ENCODE measurements at regions of chr5 and their contacts with region 1.

Region 1: DNA sequence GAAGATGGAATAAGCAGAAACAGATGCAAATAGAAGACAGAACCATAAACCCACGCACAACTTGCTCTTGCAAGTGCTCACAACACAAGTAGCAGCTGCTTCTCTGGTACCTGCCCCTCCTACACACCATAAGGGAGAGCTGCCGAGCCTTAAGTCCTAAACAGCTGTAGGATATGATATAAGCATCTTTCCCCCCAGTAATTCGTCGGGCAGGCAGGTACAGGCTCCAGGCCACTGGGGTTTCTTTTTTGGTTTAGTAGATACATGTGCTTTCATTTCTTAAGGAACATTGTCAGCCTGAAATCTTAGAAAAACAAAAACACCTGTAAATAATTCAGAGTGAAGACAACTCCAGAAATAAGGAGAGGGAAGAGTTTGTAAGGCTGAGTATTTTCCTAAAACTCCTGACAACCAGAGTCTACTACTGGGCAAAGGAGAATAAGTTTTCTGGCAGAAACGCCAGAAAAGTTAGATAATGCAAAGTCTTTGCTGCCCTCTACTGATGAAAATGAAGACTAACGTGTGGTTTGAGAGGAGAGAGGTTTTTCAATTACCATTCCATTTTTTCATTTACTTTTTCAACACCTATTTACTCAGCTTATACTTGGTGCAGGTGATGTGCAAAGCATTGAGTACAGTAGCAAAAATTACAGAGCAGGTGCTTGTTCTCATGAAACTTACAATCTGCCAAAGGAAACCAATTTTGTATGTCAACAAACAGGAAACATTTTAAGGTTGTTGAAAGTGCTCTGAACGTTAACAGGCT is 20.1 kb upstream of the TCERG1 start:
- DNase-seq: no peak
- H3K4me3 ChIP-seq: no peak overlapping the region
- H3K27ac ChIP-seq: no peak overlapping the region
- H3K4me1 ChIP-seq: no peaks in the 10 kb centered on the region
- H3K27me3 ChIP-seq: no peaks in the 10 kb centered on the region
- CTCF ChIP-seq: peak; percentile 30 to 60 (median 56)
- POLR2A ChIP-seq: no peak

Region 2: GRCh38 chr5:146291421-146292074 is 135.5 kb before region 1 on chr5:
- intact Hi-C with region 1: loop called (anchors 10 kb)
- DNase-seq: no peak
- H3K4me3 ChIP-seq: no peak overlapping the region
- H3K27ac ChIP-seq: no peak overlapping the region
- H3K4me1 ChIP-seq: no peaks in the 10 kb centered on the region
- H3K27me3 ChIP-seq: no peaks in the 10 kb centered on the region
- CTCF ChIP-seq: peak in 1 of 3 experiments; percentile 58
- POLR2A ChIP-seq: no peak

Measured in testis (tissue), 5 donors.